CD8-positive, alpha-beta T cell (primary cell): ENCODE measurements at regions of chr7 and their contacts with region 1.

Region 1: DNA sequence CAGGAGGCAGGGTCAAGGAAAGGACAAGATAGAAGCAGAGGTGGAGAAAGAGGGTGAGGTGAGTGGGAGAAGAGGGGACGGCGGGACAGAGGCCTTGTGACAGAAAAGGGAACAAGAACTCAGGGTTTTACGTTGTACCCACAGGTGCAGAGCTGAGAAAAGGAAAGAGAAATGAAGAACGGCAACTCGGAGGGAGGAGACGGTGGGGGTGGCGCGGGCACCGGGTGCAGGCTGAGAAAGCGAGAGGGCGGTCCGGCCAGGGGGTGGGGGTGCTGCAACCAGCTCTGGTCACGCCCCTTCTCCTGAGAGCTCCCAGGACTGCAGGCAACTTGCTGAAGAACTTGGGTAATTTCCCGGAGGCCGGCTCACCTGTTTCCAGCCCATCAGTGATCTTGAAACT is 65.3 kb downstream of the CARD11 start:
- DNase-seq: peak; percentile 19 to 90 (median 71)
- ATAC-seq: peak; percentile 62
- H3K4me3 ChIP-seq: peak overlapping the region; percentile 40
- H3K4me3 Mint-ChIP-seq: peak overlapping the region; percentile 85
- H3K27ac ChIP-seq: peak overlapping the region; percentile 34 to 81
- H3K27ac Mint-ChIP-seq: peak overlapping the region; percentile 95
- H3K4me1 ChIP-seq: peaks cover 60% of the 10 kb centered on the region
- H3K4me1 Mint-ChIP-seq: peaks cover 70% of the 10 kb centered on the region
- H3K27me3 ChIP-seq: no peaks in the 10 kb centered on the region
- H3K27me3 Mint-ChIP-seq: no peaks in the 10 kb centered on the region
- CTCF ChIP-seq: no peak

Region 2: DNA sequence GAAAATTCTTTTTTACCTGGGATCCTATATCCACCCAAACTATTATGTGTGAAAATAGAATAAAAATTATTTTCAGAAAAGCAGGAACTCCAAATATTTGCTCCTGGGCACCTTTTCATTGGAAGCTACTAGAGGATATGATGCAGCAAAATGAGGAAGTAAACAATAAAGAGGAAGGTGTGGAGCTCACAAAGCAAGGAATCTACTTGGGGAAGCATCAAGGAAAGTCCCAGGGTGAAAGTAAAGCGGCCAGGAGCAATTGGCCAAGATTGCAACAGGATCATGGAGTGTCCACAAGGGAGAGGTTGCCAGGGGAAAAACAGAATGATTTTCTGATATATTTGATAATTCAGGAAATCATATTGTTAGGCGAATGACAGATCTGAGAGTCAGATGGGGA is 15.5 kb before region 1 on chr7:
- CTCF ChIA-PET with region 1: interaction called, 3 read pairs
- POLR2A ChIA-PET with region 1: interaction called, 3 read pairs
- intact Hi-C with region 1: loop called in 1 of 2 experiments (anchors 2 kb)
- DNase-seq: no peak
- ATAC-seq: no peak
- H3K4me3 ChIP-seq: no peak overlapping the region
- H3K4me3 Mint-ChIP-seq: no peak overlapping the region
- H3K27ac ChIP-seq: no peak overlapping the region
- H3K27ac Mint-ChIP-seq: peak overlapping the region; percentile 77
- H3K4me1 ChIP-seq: peaks cover 27% of the 10 kb centered on the region
- H3K4me1 Mint-ChIP-seq: peaks cover 56% of the 10 kb centered on the region
- H3K27me3 ChIP-seq: no peaks in the 10 kb centered on the region
- H3K27me3 Mint-ChIP-seq: no peaks in the 10 kb centered on the region
- CTCF ChIP-seq: no peak

Region 3: DNA sequence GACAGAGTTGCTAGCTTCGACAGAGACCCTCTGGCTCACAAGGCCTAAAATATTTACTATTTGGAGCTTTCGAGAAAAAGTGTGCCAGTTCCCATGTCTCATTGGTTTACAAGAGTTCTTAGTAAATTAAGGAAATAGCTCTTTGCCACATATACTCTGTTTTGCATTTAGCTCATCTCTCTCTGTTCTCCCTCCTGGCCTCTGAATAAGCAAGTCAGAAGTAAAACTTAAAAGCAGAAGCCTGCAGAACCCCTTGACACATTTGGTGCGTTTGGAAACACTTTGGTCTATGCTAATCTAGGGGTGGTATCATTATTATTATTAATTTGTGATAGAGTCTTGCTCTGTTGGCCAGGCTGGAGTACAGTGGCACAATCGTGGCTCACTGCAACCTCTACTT is 58.9 kb after region 1 on chr7:
- CTCF ChIA-PET with region 1: no interaction called
- POLR2A ChIA-PET with region 1: interaction called, 5 read pairs
- intact Hi-C with region 1: loop called (anchors 1 to 2 kb)
- DNase-seq: no peak
- ATAC-seq: no peak
- H3K4me3 ChIP-seq: no peak overlapping the region
- H3K4me3 Mint-ChIP-seq: no peak overlapping the region
- H3K27ac ChIP-seq: no peak overlapping the region
- H3K27ac Mint-ChIP-seq: peak overlapping the region; percentile 77
- H3K4me1 ChIP-seq: peaks cover 48% of the 10 kb centered on the region
- H3K4me1 Mint-ChIP-seq: peaks cover 77% of the 10 kb centered on the region
- H3K27me3 ChIP-seq: no peaks in the 10 kb centered on the region
- H3K27me3 Mint-ChIP-seq: no peaks in the 10 kb centered on the region
- CTCF ChIP-seq: no peak

Region 4: DNA sequence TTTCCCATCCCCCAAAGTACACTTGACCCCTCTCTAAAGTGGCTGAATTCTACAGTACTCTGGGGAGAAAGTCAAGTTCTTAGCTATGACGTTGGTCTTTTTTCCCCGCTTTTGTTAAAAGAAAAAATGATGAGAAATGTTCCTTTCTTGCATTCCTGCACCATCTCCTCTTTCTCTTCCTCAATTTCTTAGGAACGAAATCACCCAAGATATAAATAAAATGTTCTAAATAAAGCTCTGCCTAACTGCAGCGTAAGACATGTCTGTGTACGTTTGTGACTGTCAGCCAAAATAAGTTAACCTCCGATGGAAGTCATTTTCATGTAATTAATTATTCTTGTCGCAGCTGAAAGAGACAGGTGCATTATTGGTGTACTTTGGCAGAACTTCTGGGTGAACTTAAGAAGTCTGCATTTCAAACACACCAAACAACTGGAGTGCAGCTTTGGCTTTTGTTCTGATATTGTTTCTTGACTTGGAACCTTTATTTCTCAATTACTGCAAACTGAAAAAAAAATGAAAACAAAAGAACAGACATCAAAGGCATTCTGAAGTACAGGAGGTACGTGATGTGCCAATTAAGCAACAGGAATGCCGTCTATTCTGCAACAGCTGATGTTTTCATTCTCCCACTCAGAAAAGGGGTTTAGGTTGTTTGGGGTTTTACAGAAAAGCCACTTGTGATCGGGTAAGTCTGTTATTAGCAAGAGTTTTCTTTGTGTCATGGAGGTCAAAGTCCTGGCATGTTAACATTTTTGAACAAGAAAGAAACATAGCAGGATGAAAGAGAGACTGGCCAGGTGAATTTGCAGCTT is 240.2 kb after region 1 on chr7:
- CTCF ChIA-PET with region 1: no interaction called
- POLR2A ChIA-PET with region 1: no interaction called
- intact Hi-C with region 1: no loop called
- DNase-seq: no peak
- ATAC-seq: no peak
- H3K4me3 ChIP-seq: no peak overlapping the region
- H3K4me3 Mint-ChIP-seq: no peak overlapping the region
- H3K27ac ChIP-seq: no peak overlapping the region
- H3K27ac Mint-ChIP-seq: no peak overlapping the region
- H3K4me1 ChIP-seq: no peaks in the 10 kb centered on the region
- H3K4me1 Mint-ChIP-seq: peaks cover 9% of the 10 kb centered on the region
- H3K27me3 ChIP-seq: peaks cover 0 to 2% of the 10 kb centered on the region in 2 experiments
- H3K27me3 Mint-ChIP-seq: peaks cover 11% of the 10 kb centered on the region
- CTCF ChIP-seq: no peak